Mammary epithelial cell (primary cell): ENCODE measurements at regions of chr3 and their contacts with region 1.

Region 1: DNA sequence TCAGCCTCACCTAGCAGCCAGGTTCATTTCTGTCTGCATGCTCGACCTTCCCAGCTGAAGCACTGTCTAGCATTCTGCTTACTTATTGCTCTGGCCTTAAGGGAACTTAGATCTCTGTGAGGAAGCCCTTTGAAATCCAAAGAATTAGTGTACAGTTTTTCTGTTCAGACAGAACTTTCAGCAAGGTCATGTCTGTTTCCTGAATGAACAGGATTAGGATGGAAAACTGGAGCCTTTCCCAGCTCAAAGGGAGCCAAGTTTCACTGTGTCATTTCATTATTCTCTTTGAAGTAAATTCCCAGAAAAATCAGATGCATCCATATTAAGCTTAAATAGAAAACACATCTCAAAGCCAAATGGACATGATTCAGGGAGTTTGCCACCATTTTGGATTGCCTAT is 457.3 kb upstream of the KCNMB2 start:
- DNase-seq: no peak
- H3K4me3 ChIP-seq: no peak overlapping the region
- H3K27ac ChIP-seq: no peak overlapping the region
- H3K4me1 ChIP-seq: no peaks in the 10 kb centered on the region
- H3K27me3 ChIP-seq: no peaks in the 10 kb centered on the region
- CTCF ChIP-seq: no peak

Region 2: DNA sequence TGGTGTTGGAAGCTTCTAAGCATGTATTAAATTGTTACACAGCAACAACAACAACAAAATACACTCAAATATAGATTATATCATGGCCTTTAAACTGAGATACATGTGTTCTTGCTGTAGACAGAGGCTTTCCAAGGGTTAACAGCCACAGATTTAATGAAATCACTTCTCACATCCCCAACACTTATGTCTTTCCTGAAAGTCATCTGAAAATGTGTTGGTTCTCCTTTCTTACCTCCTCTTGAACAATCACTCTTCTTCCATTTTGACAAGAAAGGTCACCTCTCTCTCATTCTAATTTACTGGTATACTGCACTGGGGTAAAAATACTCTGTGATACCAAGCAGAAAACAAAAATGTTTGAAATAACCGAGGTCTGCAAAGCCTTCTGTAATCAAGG is 50.0 kb before region 1 on chr3:
- CTCF ChIA-PET with region 1: no interaction called
- dilution Hi-C with region 1: loop called (anchors 5 kb)
- in situ Hi-C with region 1: no loop called
- intact Hi-C with region 1: no loop called
- DNase-seq: no peak
- H3K4me3 ChIP-seq: no peak overlapping the region
- H3K27ac ChIP-seq: no peak overlapping the region
- H3K4me1 ChIP-seq: no peaks in the 10 kb centered on the region
- H3K27me3 ChIP-seq: no peaks in the 10 kb centered on the region
- CTCF ChIP-seq: no peak